ENCODE measurements at regions of chr14 and their contacts with region 1.

Region 1: DNA sequence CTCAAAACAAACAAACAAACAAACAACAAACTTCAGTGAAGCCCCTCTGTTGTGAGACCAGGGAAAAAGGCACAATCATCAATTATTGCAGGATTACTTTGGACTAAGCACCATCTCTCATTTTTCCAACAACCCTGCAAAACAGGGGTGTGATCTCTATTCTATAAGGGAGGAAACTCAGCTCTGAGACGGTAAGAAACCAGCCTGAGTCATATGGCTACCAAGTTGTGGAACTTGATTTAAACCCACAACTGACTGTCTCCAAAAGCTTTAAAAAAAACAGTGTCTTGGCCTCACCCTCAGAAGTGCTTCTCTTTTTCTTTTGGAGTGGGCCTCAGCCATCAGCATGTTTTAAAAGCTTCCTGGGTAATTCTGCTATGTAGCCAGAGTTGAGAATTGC is 49.8 kb downstream of the RIN3 start:
- DNase-seq: no peak
- H3K4me3 Mint-ChIP-seq: no peak overlapping the region
- H3K27ac Mint-ChIP-seq: no peak overlapping the region
- H3K4me1 Mint-ChIP-seq: peaks cover 42% of the 10 kb centered on the region
- H3K27me3 Mint-ChIP-seq: peaks cover 39% of the 10 kb centered on the region

Region 2: DNA sequence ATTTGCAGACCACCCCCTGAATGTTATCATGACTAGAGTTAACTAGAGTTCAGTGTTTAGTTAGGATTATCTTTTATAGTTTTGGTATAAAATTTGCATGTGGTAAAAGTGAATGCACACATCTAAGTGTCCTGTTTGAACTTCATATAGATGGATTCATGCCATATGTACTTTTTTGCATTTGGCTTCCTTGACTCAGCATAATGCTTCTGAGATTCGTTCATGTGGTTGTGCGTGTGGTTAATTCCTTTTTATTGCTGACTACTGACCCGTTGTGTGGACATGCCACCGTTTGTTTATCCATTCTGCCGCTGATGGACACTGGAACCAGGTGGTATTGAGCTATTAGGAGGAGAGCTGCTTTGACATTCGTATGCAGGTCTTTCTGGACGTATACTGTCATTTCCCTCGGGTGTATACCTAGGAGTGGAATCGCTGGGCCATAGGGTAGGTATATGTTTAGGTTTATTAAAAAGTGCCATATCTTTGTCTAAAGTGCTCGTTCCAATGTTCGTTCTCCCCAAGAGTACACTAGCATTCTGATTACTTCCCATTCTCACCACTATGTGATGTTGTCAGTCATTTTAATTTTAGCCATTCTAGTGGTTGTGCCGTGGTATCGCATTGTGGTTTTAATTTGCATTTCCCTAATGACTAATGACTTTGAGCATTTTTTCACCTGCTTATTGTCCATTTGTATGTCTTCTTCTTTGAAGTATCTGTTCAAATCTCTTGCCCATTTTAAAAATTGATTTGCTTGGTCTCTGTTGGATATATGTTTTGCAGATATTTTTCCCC is 12.1 kb before region 1 on chr14:
- intact Hi-C with region 1: loop called (anchors 1 kb)
- DNase-seq: no peak
- H3K4me3 Mint-ChIP-seq: no peak overlapping the region
- H3K27ac Mint-ChIP-seq: no peak overlapping the region
- H3K4me1 Mint-ChIP-seq: peaks cover 22% of the 10 kb centered on the region
- H3K27me3 Mint-ChIP-seq: peaks cover 33% of the 10 kb centered on the region

Region 3: DNA sequence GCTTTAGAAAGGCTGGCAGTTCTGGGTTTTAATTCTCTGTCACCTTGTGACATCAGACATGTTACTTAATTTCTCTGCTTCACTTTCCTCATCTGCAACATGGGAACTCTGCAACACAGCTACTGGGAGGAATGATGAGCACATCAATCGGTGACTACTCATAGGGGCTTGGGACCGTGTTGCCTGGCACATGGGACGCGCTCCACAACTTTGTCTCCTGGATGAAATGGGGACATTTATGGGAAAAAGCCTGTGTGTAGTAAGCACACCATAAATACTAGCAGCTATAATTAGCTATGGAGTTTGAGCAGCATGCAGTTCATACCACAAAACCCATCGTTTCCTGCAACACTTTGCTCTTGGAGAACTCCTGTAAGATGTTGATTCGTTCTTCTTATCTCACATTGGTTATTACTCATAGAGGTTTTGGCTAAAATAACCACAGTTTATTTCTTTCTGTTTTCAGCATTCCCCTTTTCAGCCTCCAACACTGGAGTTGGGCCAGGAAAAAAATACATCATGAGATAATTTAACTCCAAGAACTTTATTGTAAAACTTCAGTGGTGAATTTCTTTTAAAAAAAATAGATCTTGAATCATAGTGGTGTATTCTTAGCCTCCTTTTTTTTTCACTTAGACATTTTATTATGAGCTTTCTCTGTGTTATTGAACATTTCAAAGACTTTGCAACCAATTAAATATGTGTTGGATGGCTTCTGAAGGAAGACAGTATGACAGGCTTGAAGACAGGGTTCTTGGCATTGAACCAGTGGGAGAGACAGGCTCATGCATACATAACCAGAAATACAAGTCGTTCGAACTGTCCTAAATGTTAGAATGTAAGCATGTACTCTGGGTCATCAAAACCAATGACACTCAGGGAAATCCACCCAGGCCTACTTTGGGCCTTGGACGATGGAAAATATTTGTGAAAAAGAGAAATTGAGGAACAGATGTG is 22.9 kb after region 1 on chr14:
- intact Hi-C with region 1: loop called (anchors 1 kb)
- DNase-seq: peak; percentile 44
- H3K4me3 Mint-ChIP-seq: peak overlapping the region; percentile 49
- H3K27ac Mint-ChIP-seq: peak overlapping the region; percentile 65
- H3K4me1 Mint-ChIP-seq: peaks cover 63% of the 10 kb centered on the region
- H3K27me3 Mint-ChIP-seq: peaks cover 43% of the 10 kb centered on the region

Region 4: GRCh38 chr14:92780444-92781232 is 217.3 kb after region 1 on chr14:
- intact Hi-C with region 1: no loop called
- DNase-seq: no peak
- H3K4me3 Mint-ChIP-seq: no peak overlapping the region
- H3K27ac Mint-ChIP-seq: no peak overlapping the region
- H3K4me1 Mint-ChIP-seq: peaks cover 15% of the 10 kb centered on the region
- H3K27me3 Mint-ChIP-seq: peaks cover 37% of the 10 kb centered on the region

Measured in activated T-helper 2 cell treated with anti-CD3 and anti-CD28 coated beads, Interferon-gamma antibody, Interleukin-2, Interleukin-4, amounts not matched to agents 10 μg/mL and 5 μg/mL and 100 μg/mL, durations not matched to agents 14 hours and 24 hours and 36 hours (primary cell).